ENCODE measurements at regions of chr12 and their contacts with region 1.

Region 1: DNA sequence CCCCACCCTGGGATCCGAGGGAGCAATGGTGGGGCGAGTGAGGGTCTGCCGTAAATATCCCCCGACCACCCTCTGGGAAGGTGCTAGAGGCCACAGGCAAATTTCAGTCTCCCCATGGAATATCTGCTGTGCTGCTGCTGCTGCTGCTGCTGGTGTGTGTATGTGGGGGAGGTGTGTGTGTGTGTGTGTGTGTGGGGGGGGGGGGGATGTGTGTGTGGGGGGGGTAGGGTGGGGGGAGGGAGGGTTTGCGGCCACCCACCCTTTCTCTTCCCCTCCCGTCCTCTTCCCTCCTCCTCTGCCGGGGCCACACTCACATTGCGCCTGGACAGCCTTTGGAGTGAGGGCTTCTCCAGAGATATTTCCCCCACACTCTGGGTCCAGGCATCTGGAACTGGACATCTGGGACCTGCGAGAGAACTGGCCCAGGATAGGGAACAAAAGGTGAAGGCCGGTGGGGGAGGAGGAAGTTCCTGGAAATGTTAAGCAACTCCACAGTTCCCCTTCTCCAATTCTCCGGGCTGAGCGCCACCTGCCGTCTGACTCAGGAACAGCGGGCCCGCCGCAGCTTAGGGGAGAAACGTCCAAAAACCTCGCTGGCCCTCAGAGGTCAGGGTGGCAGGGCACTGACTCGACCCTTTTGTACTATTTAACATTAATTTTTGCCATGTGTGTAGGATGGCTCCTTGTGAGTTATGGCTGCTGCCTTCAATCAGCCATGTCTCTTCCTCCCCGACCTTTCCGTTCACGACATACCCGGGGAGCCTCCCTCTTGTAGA is at the start of gene C1RL:
- DNase-seq: peak; percentile 76
- CTCF ChIP-seq: peak; percentile 98

Region 2: GRCh38 chr12:6927379-6928024 is 181.5 kb before region 1 on chr12 and contains the start of gene ATN1:
- CTCF ChIA-PET with region 1: interaction called, 16 read pairs
- POLR2A ChIA-PET with region 1: interaction called, 6 read pairs
- DNase-seq: peak; percentile 71
- CTCF ChIP-seq: no peak

Region 3: GRCh38 chr12:6965026-6965661 is 143.8 kb before region 1 on chr12:
- CTCF ChIA-PET with region 1: interaction called, 11 read pairs
- POLR2A ChIA-PET with region 1: no interaction called
- DNase-seq: peak; percentile 84
- CTCF ChIP-seq: peak; percentile 98

Region 4: GRCh38 chr12:7018350-7019042 is 90.5 kb before region 1 on chr12 and contains the start of gene LPCAT3:
- CTCF ChIA-PET with region 1: interaction called, 10 read pairs
- POLR2A ChIA-PET with region 1: no interaction called
- DNase-seq: peak; percentile 97
- CTCF ChIP-seq: peak; percentile 83

Region 5: GRCh38 chr12:7122811-7123769 is 14.1 kb after region 1 on chr12:
- CTCF ChIA-PET with region 1: interaction called, 108 read pairs
- POLR2A ChIA-PET with region 1: interaction called, 4 read pairs
- DNase-seq: no peak
- CTCF ChIP-seq: no peak

Measured in GM10248 (cell line).